ENCODE measurements at regions of chr4 and their contacts with region 1.

Region 1: GRCh38 chr4:152090543-152090942 is 329.7 kb upstream of the GATB start:
- DNase-seq: no peak
- H3K4me3 ChIP-seq: no peak overlapping the region
- H3K4me3 Mint-ChIP-seq: no peak overlapping the region
- H3K27ac ChIP-seq: no peak overlapping the region
- H3K27ac Mint-ChIP-seq: peak overlapping the region in 1 of 7 donors; percentile 90
- H3K4me1 ChIP-seq: peaks cover 31% of the 10 kb centered on the region
- H3K4me1 Mint-ChIP-seq: peaks cover 40 to 66% (median 55%) of the 10 kb centered on the region in 4 donors
- H3K27me3 ChIP-seq: no peaks in the 10 kb centered on the region
- H3K27me3 Mint-ChIP-seq: no peaks in the 10 kb centered on the region

Region 2: DNA sequence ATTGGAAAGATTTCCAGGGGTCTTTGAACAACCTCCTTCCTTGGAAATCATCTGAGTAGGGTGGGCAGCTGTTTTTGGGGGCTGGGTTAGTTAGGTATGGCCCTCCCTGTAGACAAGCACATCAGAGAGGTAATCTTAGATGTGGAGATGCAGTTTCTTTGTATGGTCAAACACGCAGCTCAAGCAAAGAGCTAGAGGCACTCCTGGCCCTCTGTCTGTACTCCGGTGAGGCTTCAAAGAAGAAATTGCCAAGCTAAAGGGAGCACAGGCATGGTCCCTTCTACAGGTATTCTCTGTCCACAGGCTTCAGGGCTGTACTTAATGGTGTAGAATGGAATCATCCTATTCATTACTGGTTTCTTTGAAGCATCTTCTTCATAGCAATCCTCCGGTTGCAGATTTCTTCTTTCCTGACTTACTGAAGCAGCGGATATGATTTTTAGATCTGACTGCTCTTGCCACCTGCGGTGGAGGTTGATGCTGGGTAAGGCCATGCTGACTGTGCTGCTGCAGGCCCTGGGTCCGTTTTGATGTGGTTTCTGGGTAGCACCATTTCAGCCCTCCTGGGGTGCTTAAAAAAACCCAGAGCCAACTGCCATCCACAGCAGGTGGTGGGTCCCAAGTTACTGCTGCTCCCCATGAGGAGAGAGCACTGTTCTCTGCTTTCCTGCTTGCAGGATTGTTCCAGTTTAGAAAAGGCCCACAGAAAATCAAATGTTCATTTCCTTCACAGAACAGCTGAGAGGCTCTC is 10.8 kb before region 1 on chr4:
- CTCF ChIA-PET with region 1: interaction called, 4 read pairs
- POLR2A ChIA-PET with region 1: interaction called, 97 read pairs
- intact Hi-C with region 1: no loop called
- DNase-seq: peak; percentile 52 to 63 (median 57)
- H3K4me3 ChIP-seq: peak overlapping the region in 1 of 2 donors; percentile 17
- H3K4me3 Mint-ChIP-seq: peak overlapping the region in 7 of 8 donors; percentile 50 to 81 (median 66)
- H3K27ac ChIP-seq: peak overlapping the region; percentile 45
- H3K27ac Mint-ChIP-seq: peak overlapping the region; percentile 85 to 97 (median 90)
- H3K4me1 ChIP-seq: peaks cover 50% of the 10 kb centered on the region
- H3K4me1 Mint-ChIP-seq: peaks cover 43 to 85% (median 67%) of the 10 kb centered on the region in 4 donors
- H3K27me3 ChIP-seq: no peaks in the 10 kb centered on the region
- H3K27me3 Mint-ChIP-seq: no peaks in the 10 kb centered on the region

Region 3: GRCh38 chr4:152166567-152166966 is 76.0 kb after region 1 on chr4:
- CTCF ChIA-PET with region 1: no interaction called
- POLR2A ChIA-PET with region 1: no interaction called
- intact Hi-C with region 1: no loop called
- DNase-seq: no peak
- H3K4me3 ChIP-seq: no peak overlapping the region
- H3K4me3 Mint-ChIP-seq: no peak overlapping the region
- H3K27ac ChIP-seq: no peak overlapping the region
- H3K27ac Mint-ChIP-seq: no peak overlapping the region
- H3K4me1 ChIP-seq: no peaks in the 10 kb centered on the region
- H3K4me1 Mint-ChIP-seq: peaks cover 0 to 4% (median 1%) of the 10 kb centered on the region in 4 donors
- H3K27me3 ChIP-seq: no peaks in the 10 kb centered on the region
- H3K27me3 Mint-ChIP-seq: peaks cover 0 to 5% of the 10 kb centered on the region in 2 donors